ENCODE measurements at regions of chr4 and their contacts with region 1.

Region 1: DNA sequence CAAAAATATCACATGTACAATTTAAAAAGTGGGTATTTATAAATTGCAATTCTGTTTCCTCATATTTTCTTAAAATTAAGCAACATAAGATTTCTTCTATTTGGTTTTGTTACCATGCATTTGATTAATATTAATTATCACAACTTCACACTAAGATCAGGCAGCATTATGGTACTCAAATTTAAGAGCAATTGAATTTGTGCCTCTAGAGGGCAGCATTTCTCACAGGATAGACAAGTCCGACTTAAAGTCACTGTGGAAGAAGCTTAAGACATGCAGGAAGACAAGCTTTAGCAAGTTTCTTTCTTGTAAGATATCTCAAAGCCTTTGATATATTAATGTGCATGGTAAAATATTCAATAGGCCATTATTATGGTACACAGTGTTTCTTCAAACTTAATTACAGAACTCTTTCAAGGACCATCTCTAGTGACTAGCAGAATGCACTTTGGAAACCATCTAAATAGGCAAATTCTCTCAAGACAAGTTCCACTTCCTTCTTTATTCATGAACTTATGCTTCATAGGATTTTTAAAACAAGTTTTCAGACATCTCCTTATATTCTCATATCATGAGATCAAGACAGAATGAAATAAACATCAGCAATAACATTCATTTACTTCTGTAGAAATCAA is 35.0 kb downstream of the FBXW7 start:
- DNase-seq: no peak
- ATAC-seq: peak in 1 of 2 donors; percentile 75
- H3K4me3 ChIP-seq: no peak overlapping the region
- H3K27ac ChIP-seq: no peak overlapping the region
- H3K4me1 ChIP-seq: no peaks in the 10 kb centered on the region
- H3K27me3 ChIP-seq: no peaks in the 10 kb centered on the region

Region 2: GRCh38 chr4:152255437-152256011 is 245.4 kb before region 1 on chr4:
- intact Hi-C with region 1: no loop called
- DNase-seq: peak in 1 of 3 donors; percentile 36
- ATAC-seq: peak; percentile 45 to 70
- H3K4me3 ChIP-seq: no peak overlapping the region
- H3K27ac ChIP-seq: no peak overlapping the region
- H3K4me1 ChIP-seq: peaks cover 5% of the 10 kb centered on the region
- H3K27me3 ChIP-seq: no peaks in the 10 kb centered on the region

Region 3: GRCh38 chr4:152369902-152370295 is 131.0 kb before region 1 on chr4:
- intact Hi-C with region 1: no loop called
- DNase-seq: no peak
- ATAC-seq: no peak
- H3K4me3 ChIP-seq: no peak overlapping the region
- H3K27ac ChIP-seq: no peak overlapping the region
- H3K4me1 ChIP-seq: no peaks in the 10 kb centered on the region
- H3K27me3 ChIP-seq: no peaks in the 10 kb centered on the region

Region 4: DNA sequence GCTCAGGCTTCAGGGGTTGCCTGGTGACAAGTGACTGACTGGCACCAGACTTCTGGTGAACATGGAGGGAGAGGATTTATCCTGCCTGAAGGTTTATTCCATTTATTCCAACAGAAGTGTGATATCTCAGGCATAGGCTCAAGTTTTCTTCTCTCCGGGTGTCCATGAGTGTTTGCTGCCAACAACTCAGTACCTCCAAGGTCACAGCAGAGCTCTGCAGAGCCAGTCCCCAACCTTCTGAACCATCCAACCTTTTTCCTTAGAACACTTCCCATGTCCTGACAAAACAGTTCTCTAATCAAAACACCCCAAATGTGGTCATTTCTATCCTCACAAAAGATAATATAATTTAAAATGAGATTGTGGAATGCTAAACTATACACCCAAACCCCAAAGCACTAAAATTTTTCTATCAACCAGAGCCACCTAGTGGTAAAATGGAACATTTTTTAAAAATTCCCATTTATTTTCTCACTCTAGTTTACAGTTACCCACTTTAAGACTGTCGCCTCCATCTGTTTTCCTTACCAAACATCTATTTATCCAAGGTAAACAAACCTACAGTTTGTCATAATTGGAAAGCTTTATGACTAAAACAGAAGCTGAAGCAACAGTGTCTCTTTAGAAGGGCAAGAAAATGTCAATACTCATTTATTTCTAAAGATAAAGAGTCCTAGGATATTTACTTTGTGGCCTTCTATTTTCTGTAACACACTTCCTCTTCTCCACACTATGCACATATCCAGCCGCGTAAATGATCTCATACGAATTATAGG is 139.3 kb after region 1 on chr4:
- intact Hi-C with region 1: loop called (anchors 2 to 10 kb)
- DNase-seq: no peak
- ATAC-seq: peak; percentile 42 to 43
- H3K4me3 ChIP-seq: no peak overlapping the region
- H3K27ac ChIP-seq: no peak overlapping the region
- H3K4me1 ChIP-seq: no peaks in the 10 kb centered on the region
- H3K27me3 ChIP-seq: no peaks in the 10 kb centered on the region